A549 (cell line): ENCODE measurements at regions of chr2 and their contacts with region 1.

Region 1: DNA sequence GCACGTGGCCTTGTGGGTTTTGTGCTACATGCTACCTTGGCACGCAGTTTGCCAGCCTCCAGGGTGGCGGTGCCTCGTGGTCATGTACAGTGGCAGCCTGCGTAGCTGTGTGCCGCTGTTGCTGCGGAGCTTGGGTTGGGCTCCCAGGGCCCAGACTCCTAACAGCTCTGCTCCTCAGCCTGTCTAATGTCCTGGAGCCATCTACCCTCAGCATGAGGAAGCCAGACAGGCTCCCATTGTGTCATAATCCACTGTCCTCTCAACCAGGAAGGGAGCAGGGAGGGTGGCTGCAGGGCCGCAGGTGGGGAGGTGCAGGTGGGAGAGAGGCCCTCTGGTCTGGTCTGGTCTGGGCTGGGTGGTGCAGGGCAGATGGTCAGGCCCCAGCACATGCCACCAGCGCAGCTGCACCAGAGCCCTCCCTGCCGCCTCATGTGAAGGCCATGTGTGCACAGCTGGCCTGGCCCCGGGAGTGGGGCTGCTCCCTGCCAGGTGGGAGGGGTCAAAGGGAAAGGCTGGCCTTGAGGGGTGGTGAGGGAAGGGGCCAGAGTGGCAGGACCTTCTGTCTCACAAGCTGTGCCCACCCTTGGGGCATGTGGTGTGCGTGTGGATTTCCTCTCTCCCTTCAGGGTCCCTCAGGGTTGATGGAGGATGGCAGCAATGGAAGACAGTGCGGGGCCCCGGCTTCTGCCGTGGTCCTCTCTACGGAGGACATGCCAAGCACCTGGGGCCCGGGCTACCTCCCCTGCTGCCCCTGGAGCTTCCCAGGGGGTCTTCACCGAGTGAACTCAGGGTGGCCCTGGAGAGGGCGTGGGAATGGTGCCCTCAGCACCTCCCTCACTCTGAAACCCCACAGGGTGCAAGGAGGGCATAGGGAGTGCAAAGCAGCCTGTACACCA is 4.8 kb downstream of the ATOH8 start:
- DNase-seq: no peak
- ATAC-seq: no peak
- H3K4me3 ChIP-seq: no peak overlapping the region
- H3K27ac ChIP-seq: peak overlapping the region in 1 of 2 experiments; percentile 21; a peak in 1 of 6 replicates
- H3K4me1 ChIP-seq: peaks cover 47% of the 10 kb centered on the region
- CTCF ChIP-seq: no peak
- EP300 ChIP-seq: no peak
- POLR2A ChIP-seq: no peak
- RAD21 ChIP-seq: no peak

Region 2: GRCh38 chr2:85785027-85785822 is 26.6 kb after region 1 on chr2:
- CTCF ChIA-PET with region 1: interaction called, 11 read pairs
- POLR2A ChIA-PET with region 1: no interaction called
- DNase-seq: no peak
- ATAC-seq: peak in 1 of 2 experiments; percentile 4; a peak in 2 of 6 replicates
- H3K4me3 ChIP-seq: no peak overlapping the region
- H3K27ac ChIP-seq: no peak overlapping the region
- H3K4me1 ChIP-seq: peaks cover 10% of the 10 kb centered on the region; the same call in 2 of the 3 replicates
- CTCF ChIP-seq: no peak
- EP300 ChIP-seq: no peak
- POLR2A ChIP-seq: no peak
- RAD21 ChIP-seq: no peak